Activated CD4-positive, alpha-beta memory T cell treated with anti-CD3 and anti-CD28 coated beads for 36 hours (primary cell): ENCODE measurements at regions of chr14 and their contacts with region 1.

Region 1: DNA sequence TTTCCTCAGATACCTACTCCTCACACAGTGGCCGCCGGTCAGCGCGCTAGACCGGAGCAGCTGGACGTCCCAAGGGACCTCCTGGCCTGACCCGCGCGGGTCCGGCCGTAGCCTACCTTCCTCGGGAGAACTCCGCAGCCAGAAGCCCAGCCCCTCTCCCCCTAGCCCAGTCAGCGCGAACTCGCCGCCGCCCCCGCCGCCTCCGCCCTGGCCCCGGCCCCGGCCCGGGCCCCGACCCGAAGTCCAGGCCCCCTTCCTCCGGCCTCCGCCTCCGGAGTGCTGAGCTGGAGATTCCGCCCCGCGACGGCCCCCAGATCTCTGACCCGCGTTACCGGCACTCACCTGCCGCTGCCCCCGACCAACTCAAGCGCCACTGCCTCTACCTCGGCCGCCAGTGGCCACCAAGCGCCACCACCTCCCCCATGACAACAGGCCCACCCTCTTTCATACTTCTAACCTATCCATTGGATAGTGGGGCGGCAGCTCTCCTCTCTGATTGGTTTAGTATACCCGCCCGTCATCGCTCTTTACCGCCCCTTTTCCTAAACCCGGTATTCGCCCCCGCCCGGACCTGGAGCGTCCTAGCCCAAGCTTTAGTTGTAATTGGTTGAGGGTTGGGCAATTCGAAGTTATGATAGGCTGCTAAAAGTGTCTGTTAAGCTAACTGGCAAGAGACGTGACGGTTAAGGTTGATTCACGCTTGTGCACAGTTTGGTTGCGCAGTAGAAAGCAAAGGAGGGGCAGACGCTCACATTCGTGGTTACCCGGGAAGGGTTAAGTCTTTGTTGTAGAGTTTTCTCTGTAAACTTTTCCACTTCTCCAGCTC is at the start of gene NUMB:
- DNase-seq: peak; percentile 98
- H3K4me3 Mint-ChIP-seq: peak within 1 kb of the TSS; percentile 100
- H3K27ac Mint-ChIP-seq: peak within 1 kb of the TSS; percentile 94
- H3K4me1 Mint-ChIP-seq: peaks cover 44% of the 10 kb centered on the region
- H3K27me3 Mint-ChIP-seq: no peaks in the 10 kb centered on the region
- total RNA-seq, gene NUMB: 45.0 to 46.9 TPM

Region 2: GRCh38 chr14:73223049-73223448 is 235.3 kb before region 1 on chr14:
- CTCF ChIA-PET with region 1: no interaction called
- POLR2A ChIA-PET with region 1: no interaction called
- intact Hi-C with region 1: loop called (anchors 2 kb)
- DNase-seq: peak; percentile 76
- H3K4me3 Mint-ChIP-seq: no peak overlapping the region
- H3K27ac Mint-ChIP-seq: peak overlapping the region; percentile 77
- H3K4me1 Mint-ChIP-seq: peaks cover 23% of the 10 kb centered on the region
- H3K27me3 Mint-ChIP-seq: no peaks in the 10 kb centered on the region

Region 3: GRCh38 chr14:73290279-73290678 is 168.1 kb before region 1 on chr14:
- CTCF ChIA-PET with region 1: interaction called, 31 read pairs
- POLR2A ChIA-PET with region 1: interaction called, 5 read pairs
- intact Hi-C with region 1: loop called (anchors 2 kb)
- DNase-seq: peak; percentile 27
- H3K4me3 Mint-ChIP-seq: no peak overlapping the region
- H3K27ac Mint-ChIP-seq: peak overlapping the region; percentile 28
- H3K4me1 Mint-ChIP-seq: peaks cover 27% of the 10 kb centered on the region
- H3K27me3 Mint-ChIP-seq: no peaks in the 10 kb centered on the region

Region 4: DNA sequence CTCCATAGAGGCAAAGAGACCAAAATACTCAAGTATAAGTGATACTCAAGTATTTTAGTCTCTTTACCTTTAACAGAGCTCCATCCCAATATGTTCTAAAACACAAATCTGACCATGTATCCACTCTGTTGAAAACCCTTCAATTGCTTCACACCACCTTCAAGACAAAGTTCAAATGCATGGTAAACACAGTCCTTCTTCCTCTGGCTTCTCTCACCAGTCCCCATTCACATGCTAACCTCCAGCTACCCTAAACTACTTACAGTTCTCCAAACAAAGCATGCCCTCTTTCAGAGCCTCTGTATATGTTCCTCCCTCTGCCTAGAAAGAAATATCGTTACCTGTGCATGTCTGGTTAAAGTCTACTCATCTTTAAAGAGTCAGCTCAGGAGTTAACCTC is 100.2 kb before region 1 on chr14:
- CTCF ChIA-PET with region 1: no interaction called
- POLR2A ChIA-PET with region 1: no interaction called
- intact Hi-C with region 1: no loop called
- DNase-seq: no peak
- H3K4me3 Mint-ChIP-seq: no peak overlapping the region
- H3K27ac Mint-ChIP-seq: no peak overlapping the region
- H3K4me1 Mint-ChIP-seq: no peaks in the 10 kb centered on the region
- H3K27me3 Mint-ChIP-seq: no peaks in the 10 kb centered on the region

Region 5: GRCh38 chr14:73472185-73473114 is 14.1 kb after region 1 on chr14:
- CTCF ChIA-PET with region 1: interaction called, 12 read pairs
- POLR2A ChIA-PET with region 1: interaction called, 26 read pairs
- intact Hi-C with region 1: loop called (anchors 1 kb)
- DNase-seq: no peak
- H3K4me3 Mint-ChIP-seq: no peak overlapping the region
- H3K27ac Mint-ChIP-seq: no peak overlapping the region
- H3K4me1 Mint-ChIP-seq: peaks cover 17% of the 10 kb centered on the region
- H3K27me3 Mint-ChIP-seq: no peaks in the 10 kb centered on the region

Region 6: GRCh38 chr14:73491256-73492042 is 33.1 kb after region 1 on chr14:
- CTCF ChIA-PET with region 1: no interaction called
- POLR2A ChIA-PET with region 1: interaction called, 15 read pairs
- intact Hi-C with region 1: no loop called
- DNase-seq: peak; percentile 85
- H3K4me3 Mint-ChIP-seq: peak overlapping the region; percentile 77
- H3K27ac Mint-ChIP-seq: peak overlapping the region; percentile 74
- H3K4me1 Mint-ChIP-seq: peaks cover 43% of the 10 kb centered on the region
- H3K27me3 Mint-ChIP-seq: no peaks in the 10 kb centered on the region

Region 7: GRCh38 chr14:73524493-73524892 is 66.1 kb after region 1 on chr14:
- CTCF ChIA-PET with region 1: no interaction called
- POLR2A ChIA-PET with region 1: no interaction called
- intact Hi-C with region 1: no loop called
- DNase-seq: no peak
- H3K4me3 Mint-ChIP-seq: no peak overlapping the region
- H3K27ac Mint-ChIP-seq: no peak overlapping the region
- H3K4me1 Mint-ChIP-seq: no peaks in the 10 kb centered on the region
- H3K27me3 Mint-ChIP-seq: no peaks in the 10 kb centered on the region

Region 8: GRCh38 chr14:73599499-73599898 is 141.1 kb after region 1 on chr14:
- CTCF ChIA-PET with region 1: no interaction called
- POLR2A ChIA-PET with region 1: no interaction called
- intact Hi-C with region 1: no loop called
- DNase-seq: no peak
- H3K4me3 Mint-ChIP-seq: no peak overlapping the region
- H3K27ac Mint-ChIP-seq: no peak overlapping the region
- H3K4me1 Mint-ChIP-seq: no peaks in the 10 kb centered on the region
- H3K27me3 Mint-ChIP-seq: no peaks in the 10 kb centered on the region

Region 9: GRCh38 chr14:73685328-73685727 is 227.0 kb after region 1 on chr14:
- CTCF ChIA-PET with region 1: no interaction called
- POLR2A ChIA-PET with region 1: no interaction called
- intact Hi-C with region 1: no loop called
- DNase-seq: no peak
- H3K4me3 Mint-ChIP-seq: no peak overlapping the region
- H3K27ac Mint-ChIP-seq: no peak overlapping the region
- H3K4me1 Mint-ChIP-seq: no peaks in the 10 kb centered on the region
- H3K27me3 Mint-ChIP-seq: no peaks in the 10 kb centered on the region